ENCODE measurements at regions of chr3 and their contacts with region 1.

Region 1: GRCh38 chr3:151439652-151440129 is 21.2 kb downstream of the IGSF10 start:
- DNase-seq: peak; percentile 78
- ATAC-seq: peak; percentile 97
- H3K4me3 ChIP-seq: no peak overlapping the region
- H3K27ac ChIP-seq: no peak overlapping the region
- H3K4me1 ChIP-seq: no peaks in the 10 kb centered on the region; the same call in 1 of the 2 replicates
- H3K27me3 ChIP-seq: no peaks in the 10 kb centered on the region
- CTCF ChIP-seq: peak; percentile 77
- POLR2A ChIP-seq: no peak
- RAD21 ChIP-seq: peak; percentile 74

Region 2: GRCh38 chr3:151227807-151228665 is 211.7 kb before region 1 on chr3:
- CTCF ChIA-PET with region 1: no interaction called
- POLR2A ChIA-PET with region 1: no interaction called
- dilution Hi-C with region 1: no loop called
- in situ Hi-C with region 1: loop called (anchors 10 kb)
- intact Hi-C with region 1: loop called (anchors 5 kb)
- DNase-seq: peak; percentile 95
- ATAC-seq: peak; percentile 79
- H3K4me3 ChIP-seq: no peak overlapping the region
- H3K27ac ChIP-seq: peak overlapping the region; percentile 66
- H3K4me1 ChIP-seq: peaks cover 21% of the 10 kb centered on the region
- H3K27me3 ChIP-seq: no peaks in the 10 kb centered on the region
- CTCF ChIP-seq: peak; percentile 96
- POLR2A ChIP-seq: peak; percentile 67
- RAD21 ChIP-seq: peak; percentile 98

Region 3: DNA sequence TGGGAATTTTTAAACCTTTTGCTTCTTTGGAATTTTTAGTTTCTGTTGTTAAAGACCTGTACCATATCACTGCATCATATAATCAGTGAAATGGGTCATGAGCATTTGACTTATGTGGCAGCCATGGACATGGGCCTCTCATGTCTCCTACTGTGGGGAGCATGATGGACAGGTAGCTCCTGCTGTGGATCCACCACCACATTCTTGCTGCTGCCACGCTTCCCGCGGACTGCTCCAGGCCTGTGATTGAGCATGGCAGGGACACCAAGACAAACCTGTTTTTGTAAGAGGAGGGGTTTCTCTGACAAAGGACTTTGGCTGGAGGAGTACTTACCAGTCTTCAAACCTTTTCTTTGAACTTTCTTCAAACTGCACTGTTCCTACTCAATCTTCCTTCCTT is 143.5 kb before region 1 on chr3:
- CTCF ChIA-PET with region 1: no interaction called
- POLR2A ChIA-PET with region 1: interaction called, 4 read pairs
- dilution Hi-C with region 1: no loop called
- in situ Hi-C with region 1: loop called (anchors 5 kb)
- intact Hi-C with region 1: no loop called
- DNase-seq: no peak
- ATAC-seq: no peak
- H3K4me3 ChIP-seq: no peak overlapping the region
- H3K27ac ChIP-seq: no peak overlapping the region
- H3K4me1 ChIP-seq: peaks cover 2% of the 10 kb centered on the region
- H3K27me3 ChIP-seq: no peaks in the 10 kb centered on the region
- CTCF ChIP-seq: no peak
- POLR2A ChIP-seq: no peak
- RAD21 ChIP-seq: no peak

Region 4: DNA sequence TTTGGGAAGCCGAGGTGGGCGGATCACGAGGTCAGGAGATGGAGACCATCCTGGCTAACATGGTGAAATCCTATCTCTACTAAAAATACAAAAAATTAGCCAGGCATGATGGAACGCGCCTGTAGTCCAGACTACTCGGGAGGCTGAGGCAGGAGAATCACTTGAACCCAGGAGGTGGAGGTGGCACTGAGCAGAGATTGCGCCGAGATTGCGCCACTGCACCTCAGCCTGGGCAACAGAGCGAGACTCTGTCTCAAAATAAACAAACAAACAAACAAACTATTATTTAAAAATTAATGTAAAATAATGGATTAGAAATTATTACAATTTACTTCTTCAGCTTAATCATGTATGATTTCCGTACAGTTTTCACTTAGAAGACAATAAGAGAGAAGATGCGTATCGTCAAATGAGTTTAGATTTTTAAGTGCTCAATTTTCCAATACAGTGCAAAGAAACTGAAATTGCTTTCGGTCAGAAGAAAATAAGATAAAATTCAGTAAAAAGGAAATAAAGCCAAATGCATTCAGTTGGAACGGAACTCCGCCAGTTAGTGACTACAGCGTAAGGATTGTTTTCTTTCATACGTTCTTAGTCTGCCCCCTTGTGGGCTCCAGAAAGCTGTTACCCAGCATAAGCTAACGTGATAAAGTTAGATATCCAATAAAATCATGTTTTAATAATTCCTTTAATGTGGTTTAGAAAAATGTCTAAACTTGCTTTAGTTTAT is 399.1 kb after region 1 on chr3:
- CTCF ChIA-PET with region 1: interaction called, 3 read pairs
- POLR2A ChIA-PET with region 1: no interaction called
- dilution Hi-C with region 1: no loop called
- in situ Hi-C with region 1: loop called (anchors 5 kb)
- intact Hi-C with region 1: loop called (anchors 1 kb)
- DNase-seq: peak; percentile 88
- ATAC-seq: peak; percentile 74
- H3K4me3 ChIP-seq: no peak overlapping the region
- H3K27ac ChIP-seq: no peak overlapping the region
- H3K4me1 ChIP-seq: peaks cover 10% of the 10 kb centered on the region
- H3K27me3 ChIP-seq: no peaks in the 10 kb centered on the region
- CTCF ChIP-seq: peak; percentile 89
- POLR2A ChIP-seq: no peak
- RAD21 ChIP-seq: peak; percentile 87

Region 5: GRCh38 chr3:151918253-151919029 is 478.8 kb after region 1 on chr3:
- CTCF ChIA-PET with region 1: interaction called, 9 read pairs
- POLR2A ChIA-PET with region 1: no interaction called
- dilution Hi-C with region 1: no loop called
- in situ Hi-C with region 1: loop called (anchors 5 kb)
- intact Hi-C with region 1: loop called (anchors 1 kb)
- DNase-seq: peak; percentile 75
- ATAC-seq: peak; percentile 87
- H3K4me3 ChIP-seq: no peak overlapping the region
- H3K27ac ChIP-seq: no peak overlapping the region
- H3K4me1 ChIP-seq: no peaks in the 10 kb centered on the region
- H3K27me3 ChIP-seq: no peaks in the 10 kb centered on the region
- CTCF ChIP-seq: peak; percentile 84
- POLR2A ChIP-seq: no peak
- RAD21 ChIP-seq: peak; percentile 89